ENCODE measurements at regions of chr5 and their contacts with region 1.

Region 1: DNA sequence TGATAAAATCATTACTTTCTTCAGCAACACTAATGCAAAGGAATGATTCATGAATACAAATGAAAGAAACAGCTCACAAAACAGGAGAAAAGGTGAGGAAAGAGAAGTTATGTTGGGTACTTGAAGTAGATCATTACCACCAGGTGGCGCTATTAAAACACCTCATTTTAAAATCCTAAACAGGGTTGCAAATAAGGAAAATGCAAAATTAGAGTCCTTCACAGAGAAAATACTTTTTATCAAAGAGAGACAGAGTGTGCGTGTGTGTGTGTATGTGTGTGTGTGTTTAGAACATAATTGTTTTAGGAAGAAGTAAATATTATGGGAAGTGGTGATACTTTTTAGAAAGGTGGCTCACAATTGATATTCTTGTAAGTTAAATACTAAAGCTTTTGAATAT is 49.5 kb upstream of the CD180 start:
- DNase-seq: peak; percentile 53
- ATAC-seq: 0 out of 2 replicates have a peak, but pooled peaks have one; percentile 42
- H3K4me3 ChIP-seq: no peak overlapping the region
- H3K27ac ChIP-seq: no peak overlapping the region
- H3K4me1 ChIP-seq: no peaks in the 10 kb centered on the region
- H3K27me3 ChIP-seq: no peaks in the 10 kb centered on the region
- CTCF ChIP-seq: peak; percentile 53 to 77 (median 60)
- POLR2A ChIP-seq: no peak
- RAD21 ChIP-seq: peak; percentile 78

Region 2: DNA sequence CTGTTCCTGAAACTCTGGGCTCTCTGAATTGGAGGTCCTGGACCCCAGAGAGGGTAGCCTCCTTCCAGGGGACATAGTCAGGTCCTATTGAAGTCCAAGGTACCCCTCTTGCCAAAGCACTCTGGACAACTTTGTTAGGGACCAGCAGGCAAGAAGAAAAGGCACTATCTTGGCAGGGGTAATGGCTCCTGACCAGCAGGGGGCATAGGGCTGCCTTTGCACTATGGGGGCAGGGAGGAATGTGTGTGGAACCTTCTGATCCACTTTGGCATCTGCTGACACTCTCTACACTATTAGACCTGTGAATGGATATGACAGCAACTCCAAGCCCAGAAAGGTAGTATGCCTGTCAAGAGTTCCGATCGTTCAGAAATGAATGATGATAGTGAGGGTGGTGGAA is 129.5 kb after region 1 on chr5:
- CTCF ChIA-PET with region 1: no interaction called
- POLR2A ChIA-PET with region 1: no interaction called
- RAD21 ChIA-PET with region 1: no interaction called
- intact Hi-C with region 1: no loop called
- DNase-seq: no peak
- ATAC-seq: no peak
- H3K4me3 ChIP-seq: no peak overlapping the region
- H3K27ac ChIP-seq: no peak overlapping the region
- H3K4me1 ChIP-seq: no peaks in the 10 kb centered on the region
- H3K27me3 ChIP-seq: no peaks in the 10 kb centered on the region
- CTCF ChIP-seq: peak in 2 of 3 experiments; percentile 14 to 20; a peak in 1 of 6 replicates
- POLR2A ChIP-seq: no peak
- RAD21 ChIP-seq: no peak

Region 3: DNA sequence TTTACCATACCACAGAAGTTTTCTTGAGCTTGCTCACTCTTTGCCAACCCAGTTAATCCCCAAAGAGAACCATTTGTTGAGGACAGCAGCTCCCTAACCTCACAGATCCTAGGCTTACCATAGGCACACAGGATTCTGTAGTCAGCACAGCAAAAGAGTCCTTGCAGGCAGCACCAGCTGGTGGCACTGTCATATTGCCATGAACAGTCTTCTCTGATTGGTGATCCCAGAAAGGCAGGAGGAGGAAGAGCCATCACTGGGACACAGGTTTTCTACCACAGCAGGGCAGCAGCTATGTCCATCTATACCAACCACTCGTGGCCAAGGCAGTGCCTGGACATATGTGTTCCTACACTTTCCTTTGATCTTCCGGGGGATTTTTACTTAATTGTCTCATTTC is 247.6 kb after region 1 on chr5:
- CTCF ChIA-PET with region 1: no interaction called
- POLR2A ChIA-PET with region 1: no interaction called
- RAD21 ChIA-PET with region 1: no interaction called
- intact Hi-C with region 1: loop called (anchors 10 kb)
- DNase-seq: peak; percentile 3
- ATAC-seq: peak; percentile 78
- H3K4me3 ChIP-seq: no peak overlapping the region
- H3K27ac ChIP-seq: no peak overlapping the region
- H3K4me1 ChIP-seq: no peaks in the 10 kb centered on the region
- H3K27me3 ChIP-seq: no peaks in the 10 kb centered on the region
- CTCF ChIP-seq: peak; percentile 20 to 28 (median 27); a peak in 4 of 6 replicates
- POLR2A ChIP-seq: no peak
- RAD21 ChIP-seq: peak; percentile 52

Region 4: GRCh38 chr5:68252673-68253623 is 1006.8 kb after region 1 on chr5:
- CTCF ChIA-PET with region 1: interaction called, 47 read pairs
- POLR2A ChIA-PET with region 1: interaction called, 3 read pairs
- RAD21 ChIA-PET with region 1: interaction called, 4 to 7 read pairs
- intact Hi-C with region 1: loop called (anchors 1 kb)
- DNase-seq: peak; percentile 46
- ATAC-seq: peak; percentile 94
- H3K4me3 ChIP-seq: no peak overlapping the region
- H3K27ac ChIP-seq: no peak overlapping the region
- H3K4me1 ChIP-seq: no peaks in the 10 kb centered on the region
- H3K27me3 ChIP-seq: no peaks in the 10 kb centered on the region
- CTCF ChIP-seq: peak; percentile 56 to 85 (median 84); a peak in 5 of 6 replicates
- POLR2A ChIP-seq: no peak
- RAD21 ChIP-seq: peak; percentile 90

Region 5: DNA sequence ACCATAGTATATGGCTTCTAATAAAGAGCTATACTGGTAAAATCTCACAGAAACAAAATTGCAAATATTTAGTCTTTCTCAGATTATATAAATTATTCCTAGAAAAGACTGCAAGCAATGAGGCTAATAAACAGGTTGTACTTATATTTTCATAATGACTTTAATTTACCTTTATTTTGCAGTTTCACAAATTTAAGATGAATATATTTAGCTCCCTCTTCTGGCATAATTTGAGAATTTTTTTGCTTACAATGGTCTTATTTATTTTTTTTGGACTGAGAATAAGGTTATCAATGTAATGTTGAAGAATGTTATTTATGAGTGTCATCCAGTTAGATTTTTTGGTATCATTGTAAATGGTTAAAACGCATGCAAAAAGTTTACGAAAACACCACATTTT is 1026.2 kb after region 1 on chr5:
- CTCF ChIA-PET with region 1: interaction called, 24 read pairs
- POLR2A ChIA-PET with region 1: no interaction called
- RAD21 ChIA-PET with region 1: interaction called in 1 of 2 experiments, 12 read pairs
- intact Hi-C with region 1: loop called (anchors 1 kb)
- DNase-seq: no peak
- ATAC-seq: no peak
- H3K4me3 ChIP-seq: no peak overlapping the region
- H3K27ac ChIP-seq: no peak overlapping the region
- H3K4me1 ChIP-seq: peaks cover 0 to 4% of the 10 kb centered on the region in 2 experiments; a peak in 2 of 4 replicates
- H3K27me3 ChIP-seq: no peaks in the 10 kb centered on the region
- CTCF ChIP-seq: peak; percentile 1 to 58 (median 11); a peak in 2 of 6 replicates
- POLR2A ChIP-seq: no peak
- RAD21 ChIP-seq: peak; percentile 53

Region 6: DNA sequence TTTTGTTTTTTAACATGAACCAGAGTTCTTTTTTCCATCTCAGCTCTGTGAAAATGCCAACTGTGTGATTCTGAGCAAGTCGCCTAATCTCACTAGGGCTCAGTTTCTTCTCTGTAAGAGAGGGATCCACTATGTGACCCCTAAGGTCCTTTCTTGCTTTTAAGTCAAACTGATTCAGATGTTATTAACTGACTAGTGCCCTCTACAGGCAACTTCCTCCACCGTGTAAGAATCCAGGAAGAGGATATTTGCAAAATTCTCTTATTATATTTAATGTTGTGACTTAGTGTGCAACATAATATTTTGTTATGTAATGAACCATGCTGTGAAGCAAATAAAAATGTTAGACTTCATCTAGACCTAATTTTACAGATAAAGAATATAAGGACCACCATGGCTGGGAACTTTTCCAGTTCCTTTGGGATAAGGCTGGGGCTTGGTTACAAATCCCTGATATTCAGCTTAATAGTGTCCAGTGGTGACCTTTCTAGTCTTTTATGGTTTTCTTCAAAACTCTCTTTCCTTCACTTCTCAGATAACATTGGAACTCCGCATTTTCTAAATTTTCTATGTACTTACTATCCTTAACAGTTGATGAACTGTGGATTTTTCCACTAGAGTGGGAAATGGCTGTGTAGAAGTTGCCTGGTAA is 1214.2 kb after region 1 on chr5:
- CTCF ChIA-PET with region 1: no interaction called
- POLR2A ChIA-PET with region 1: no interaction called
- RAD21 ChIA-PET with region 1: no interaction called
- intact Hi-C with region 1: loop called (anchors 10 kb)
- DNase-seq: peak; percentile 60
- ATAC-seq: peak; percentile 82
- H3K4me3 ChIP-seq: no peak overlapping the region
- H3K27ac ChIP-seq: no peak overlapping the region
- H3K4me1 ChIP-seq: peaks cover 3 to 23% of the 10 kb centered on the region in 2 experiments; a peak in 2 of 4 replicates
- H3K27me3 ChIP-seq: no peaks in the 10 kb centered on the region
- CTCF ChIP-seq: peak; percentile 67 to 78 (median 67); a peak in 5 of 6 replicates
- POLR2A ChIP-seq: no peak
- RAD21 ChIP-seq: peak; percentile 83